Activated T-helper 1 cell treated with anti-CD3 and anti-CD28 coated beads, Interleukin-12 subunit alpha, Interleukin-12 subunit beta, Interleukin-2, Interleukin-4 antibody, amounts not matched to agents 30 ng/mL and 10 ng/mL and 1 ng/mL, durations not matched to agents 14 hours and 24 hours and 36 hours (primary cell): ENCODE measurements at regions of chr11 and their contacts with region 1.

Region 1: DNA sequence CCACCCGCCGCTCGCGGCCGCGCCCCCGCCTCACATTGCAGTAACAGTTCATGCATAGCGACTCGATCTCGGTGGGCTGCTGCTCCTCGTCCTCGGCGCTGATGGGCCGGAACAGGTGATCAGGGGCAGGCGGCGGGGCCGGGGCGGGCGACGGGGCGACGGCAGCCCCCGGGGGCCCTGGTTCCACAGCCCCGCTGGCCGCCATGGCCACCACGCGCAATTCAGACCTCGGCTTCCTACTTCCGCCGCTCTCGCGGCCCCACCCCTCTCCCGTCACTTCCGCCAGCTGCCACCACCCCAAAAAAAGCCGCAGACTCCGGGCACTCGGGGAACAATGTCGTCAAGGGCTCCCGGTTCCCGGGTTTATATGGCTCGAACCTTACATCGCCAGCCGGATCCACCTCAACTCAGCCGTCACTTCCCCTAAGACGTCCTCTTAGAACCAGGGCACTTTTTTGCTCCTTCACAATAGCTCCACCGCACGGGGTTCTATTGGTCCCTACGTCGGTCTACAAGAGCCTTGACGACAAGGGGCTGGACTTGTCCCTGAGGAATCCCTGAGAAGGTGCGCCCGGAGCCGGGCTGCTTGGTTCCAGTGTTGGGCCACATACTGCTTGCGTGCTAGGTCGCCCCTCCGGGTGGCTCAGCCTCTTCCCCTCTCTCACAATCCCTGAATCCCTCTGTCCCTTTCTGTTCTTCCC is at the start of gene ZPR1:
- DNase-seq: peak; percentile 84
- H3K4me3 Mint-ChIP-seq: peak within 1 kb of the TSS; percentile 90
- H3K27ac Mint-ChIP-seq: peak within 1 kb of the TSS; percentile 88
- H3K4me1 Mint-ChIP-seq: peaks cover 50% of the 10 kb centered on the region
- H3K27me3 Mint-ChIP-seq: no peaks in the 10 kb centered on the region
- total RNA-seq, gene ZPR1: 104 TPM in 2 replicates

Region 2: GRCh38 chr11:116835791-116836631 is 48.1 kb after region 1 on chr11:
- intact Hi-C with region 1: loop called (anchors 1 kb)
- DNase-seq: peak; percentile 73
- H3K4me3 Mint-ChIP-seq: peak overlapping the region; percentile 54
- H3K27ac Mint-ChIP-seq: no peak overlapping the region
- H3K4me1 Mint-ChIP-seq: peaks cover 5% of the 10 kb centered on the region
- H3K27me3 Mint-ChIP-seq: peaks cover 4% of the 10 kb centered on the region

Region 3: GRCh38 chr11:117026593-117027330 is 238.8 kb after region 1 on chr11:
- intact Hi-C with region 1: loop called (anchors 5 kb)
- DNase-seq: no peak
- H3K4me3 Mint-ChIP-seq: peak overlapping the region; percentile 38
- H3K27ac Mint-ChIP-seq: peak overlapping the region; percentile 90
- H3K4me1 Mint-ChIP-seq: peaks cover 63% of the 10 kb centered on the region
- H3K27me3 Mint-ChIP-seq: no peaks in the 10 kb centered on the region

Region 4: GRCh38 chr11:117143871-117144476 is 356.0 kb after region 1 on chr11 and contains the start of gene PAFAH1B2:
- intact Hi-C with region 1: loop called (anchors 1 kb)
- DNase-seq: peak; percentile 93
- H3K4me3 Mint-ChIP-seq: peak within 1 kb of the TSS; percentile 97
- H3K27ac Mint-ChIP-seq: peak within 1 kb of the TSS; percentile 90
- H3K4me1 Mint-ChIP-seq: peaks cover 29% of the 10 kb centered on the region
- H3K27me3 Mint-ChIP-seq: peaks cover 8% of the 10 kb centered on the region
- total RNA-seq, gene PAFAH1B2: 71.8 and 83.6 TPM in 2 replicates

Region 5: DNA sequence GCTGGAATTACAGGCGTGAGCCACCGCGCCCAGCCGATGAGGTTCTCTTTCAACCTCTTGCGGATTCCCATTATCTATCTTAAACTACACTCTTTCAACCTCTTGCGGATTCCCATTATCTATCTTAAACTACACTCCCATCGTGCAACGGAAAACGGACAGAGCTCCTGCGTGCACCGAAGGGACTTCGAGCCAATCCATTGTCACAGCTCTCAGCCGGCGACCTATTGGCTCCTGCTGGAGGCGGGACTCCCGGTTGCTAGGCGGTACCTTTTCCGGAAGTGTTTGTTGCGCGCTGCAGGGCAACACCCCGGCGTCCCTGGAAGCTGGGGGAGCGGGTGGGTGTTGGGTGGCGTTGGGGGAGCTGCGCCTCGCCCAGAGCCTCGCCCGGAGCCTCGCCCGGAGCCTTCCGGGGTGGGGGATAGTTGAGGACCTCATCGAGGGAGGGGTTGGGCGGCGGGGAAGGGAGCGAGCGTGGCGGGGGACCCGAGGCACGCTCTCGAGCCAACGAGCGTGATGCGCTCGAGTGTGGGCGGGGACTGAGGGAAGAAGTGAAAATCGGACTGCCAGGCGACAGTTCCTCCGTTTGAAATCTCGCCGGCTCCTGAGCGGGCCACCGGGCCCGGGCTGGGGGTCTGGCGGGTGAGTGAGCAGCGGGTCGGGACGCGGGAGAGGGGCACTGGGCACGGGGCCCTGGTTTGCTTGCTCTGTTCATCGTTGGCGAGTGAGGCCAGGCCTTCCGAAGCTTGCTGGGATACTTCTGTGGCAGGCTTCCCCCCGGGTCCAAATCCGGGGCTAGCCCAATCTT is 539.8 kb after region 1 on chr11 and contains the start of gene CEP164:
- intact Hi-C with region 1: loop called (anchors 5 kb)
- DNase-seq: peak; percentile 93
- H3K4me3 Mint-ChIP-seq: peak within 1 kb of the TSS; percentile 75
- H3K27ac Mint-ChIP-seq: peak within 1 kb of the TSS; percentile 45
- H3K4me1 Mint-ChIP-seq: peaks cover 9% of the 10 kb centered on the region
- H3K27me3 Mint-ChIP-seq: peaks cover 9% of the 10 kb centered on the region
- total RNA-seq, gene CEP164: 37.2 and 43.5 TPM in 2 replicates